ENCODE measurements at regions of chr3 and their contacts with region 1.

Region 1: GRCh38 chr3:151276687-151277042 is 1.7 kb downstream of the P2RY14 start:
- DNase-seq: no peak
- ATAC-seq: no peak
- H3K4me3 ChIP-seq: no peak overlapping the region
- H3K27ac ChIP-seq: no peak overlapping the region
- H3K4me1 ChIP-seq: no peaks in the 10 kb centered on the region
- H3K27me3 ChIP-seq: no peaks in the 10 kb centered on the region

Region 2: GRCh38 chr3:151227807-151228665 is 48.6 kb before region 1 on chr3:
- intact Hi-C with region 1: loop called (anchors 5 kb)
- DNase-seq: peak; percentile 66 to 82 (median 77)
- ATAC-seq: peak; percentile 90
- H3K4me3 ChIP-seq: no peak overlapping the region
- H3K27ac ChIP-seq: no peak overlapping the region
- H3K4me1 ChIP-seq: no peaks in the 10 kb centered on the region
- H3K27me3 ChIP-seq: no peaks in the 10 kb centered on the region

Region 3: GRCh38 chr3:151345859-151346258 is 69.2 kb after region 1 on chr3:
- intact Hi-C with region 1: no loop called
- DNase-seq: no peak
- ATAC-seq: peak in 1 of 2 donors; percentile 72
- H3K4me3 ChIP-seq: peak overlapping the region; percentile 26
- H3K27ac ChIP-seq: no peak overlapping the region
- H3K4me1 ChIP-seq: peaks cover 3% of the 10 kb centered on the region
- H3K27me3 ChIP-seq: no peaks in the 10 kb centered on the region

Region 4: GRCh38 chr3:151384741-151385174 is 108.1 kb after region 1 on chr3 and contains the start of gene P2RY12:
- intact Hi-C with region 1: no loop called
- DNase-seq: no peak
- ATAC-seq: peak; percentile 37 to 74
- H3K4me3 ChIP-seq: peak within 1 kb of the TSS; percentile 49
- H3K27ac ChIP-seq: no peak within 1 kb of the TSS
- H3K4me1 ChIP-seq: no peaks in the 10 kb centered on the region
- H3K27me3 ChIP-seq: no peaks in the 10 kb centered on the region
- total RNA-seq, gene P2RY12: 1.3 to 4.0 (median 1.4) TPM

Measured in right cardiac atrium (tissue), 5 donors.